ENCODE measurements at regions of chr19 and their contacts with region 1.

Region 1: DNA sequence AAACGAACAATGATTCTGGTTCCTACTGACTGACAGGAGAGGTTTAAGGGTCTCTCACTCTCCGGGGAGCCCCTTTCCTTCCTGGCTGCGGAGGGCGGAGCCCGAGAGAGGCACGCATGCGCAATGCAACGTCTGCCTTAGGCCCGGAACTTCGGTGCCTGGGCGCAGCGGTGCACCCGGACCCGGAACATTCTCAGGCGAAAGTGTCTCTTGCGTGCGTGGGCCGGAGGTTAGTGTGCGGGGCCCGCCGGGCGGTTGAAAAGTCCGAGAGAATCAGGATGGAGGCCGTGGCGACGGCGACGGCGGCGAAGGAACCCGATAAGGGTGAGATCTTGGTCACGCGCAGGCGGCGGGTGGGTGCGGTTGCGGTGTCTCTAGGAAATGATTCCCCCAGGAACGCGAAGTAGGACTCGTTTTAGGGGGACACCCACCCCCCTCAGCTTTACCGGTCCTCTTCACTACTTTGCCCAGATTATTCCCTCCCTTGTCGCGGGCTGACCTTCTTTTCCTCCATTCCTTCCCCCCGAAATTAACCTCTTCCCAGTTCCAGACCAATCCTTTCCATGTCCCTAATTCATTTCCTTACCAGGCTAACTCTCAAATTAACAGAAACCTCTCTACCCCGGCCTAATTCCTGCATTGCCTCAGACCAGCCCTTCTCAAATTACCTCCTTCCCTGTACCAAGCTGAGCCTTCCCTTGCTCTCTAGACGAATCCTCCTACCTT is at the start of gene CCDC97:
- DNase-seq: peak; percentile 89 to 95 (median 90)
- ATAC-seq: peak; percentile 79 to 91 (median 86)
- H3K4me3 ChIP-seq: peak within 1 kb of the TSS; percentile 40 to 95 (median 76)
- H3K27ac ChIP-seq: peak within 1 kb of the TSS; percentile 90 to 99 (median 96)
- H3K4me1 ChIP-seq: peaks cover 6 to 67% (median 31%) of the 10 kb centered on the region in 12 donors
- H3K27me3 ChIP-seq: no peaks in the 10 kb centered on the region
- CTCF ChIP-seq: peak in 1 of 12 donors; percentile 19
- POLR2A ChIP-seq: peak in 1 of 2 donors; percentile 60
- total RNA-seq, gene CCDC97: 10.0 to 22.2 (median 14.2) TPM

Region 2: DNA sequence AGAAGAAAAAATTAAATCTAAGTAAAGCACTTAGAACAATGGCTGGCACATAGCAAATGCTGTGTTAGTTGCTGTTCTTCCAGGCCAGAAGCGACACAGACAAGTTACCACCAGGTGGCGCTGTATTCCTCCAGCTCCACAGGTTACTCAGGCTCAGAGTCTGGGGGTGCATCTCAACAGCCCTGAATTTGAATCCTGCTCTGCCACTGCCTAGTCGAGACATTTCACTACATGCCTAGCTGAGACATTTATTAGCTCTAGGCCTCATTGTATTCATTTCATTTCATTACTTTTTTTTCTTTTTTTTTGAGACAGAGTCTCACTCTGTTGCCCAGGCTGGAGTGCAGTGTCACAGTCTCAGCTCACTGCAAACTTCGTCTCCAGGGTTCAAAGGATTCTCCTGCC is 335.6 kb before region 1 on chr19:
- intact Hi-C with region 1: loop called in 1 of 10 experiments (anchors 5 kb)
- DNase-seq: peak; percentile 42 to 68 (median 65)
- ATAC-seq: peak in 2 of 4 donors; percentile 46 to 67
- H3K4me3 ChIP-seq: no peak overlapping the region
- H3K27ac ChIP-seq: no peak overlapping the region
- H3K4me1 ChIP-seq: no peaks in the 10 kb centered on the region
- H3K27me3 ChIP-seq: peaks cover 0 to 20% (median 0%) of the 10 kb centered on the region in 9 donors
- CTCF ChIP-seq: peak; percentile 70 to 95 (median 84)
- POLR2A ChIP-seq: no peak

Region 3: DNA sequence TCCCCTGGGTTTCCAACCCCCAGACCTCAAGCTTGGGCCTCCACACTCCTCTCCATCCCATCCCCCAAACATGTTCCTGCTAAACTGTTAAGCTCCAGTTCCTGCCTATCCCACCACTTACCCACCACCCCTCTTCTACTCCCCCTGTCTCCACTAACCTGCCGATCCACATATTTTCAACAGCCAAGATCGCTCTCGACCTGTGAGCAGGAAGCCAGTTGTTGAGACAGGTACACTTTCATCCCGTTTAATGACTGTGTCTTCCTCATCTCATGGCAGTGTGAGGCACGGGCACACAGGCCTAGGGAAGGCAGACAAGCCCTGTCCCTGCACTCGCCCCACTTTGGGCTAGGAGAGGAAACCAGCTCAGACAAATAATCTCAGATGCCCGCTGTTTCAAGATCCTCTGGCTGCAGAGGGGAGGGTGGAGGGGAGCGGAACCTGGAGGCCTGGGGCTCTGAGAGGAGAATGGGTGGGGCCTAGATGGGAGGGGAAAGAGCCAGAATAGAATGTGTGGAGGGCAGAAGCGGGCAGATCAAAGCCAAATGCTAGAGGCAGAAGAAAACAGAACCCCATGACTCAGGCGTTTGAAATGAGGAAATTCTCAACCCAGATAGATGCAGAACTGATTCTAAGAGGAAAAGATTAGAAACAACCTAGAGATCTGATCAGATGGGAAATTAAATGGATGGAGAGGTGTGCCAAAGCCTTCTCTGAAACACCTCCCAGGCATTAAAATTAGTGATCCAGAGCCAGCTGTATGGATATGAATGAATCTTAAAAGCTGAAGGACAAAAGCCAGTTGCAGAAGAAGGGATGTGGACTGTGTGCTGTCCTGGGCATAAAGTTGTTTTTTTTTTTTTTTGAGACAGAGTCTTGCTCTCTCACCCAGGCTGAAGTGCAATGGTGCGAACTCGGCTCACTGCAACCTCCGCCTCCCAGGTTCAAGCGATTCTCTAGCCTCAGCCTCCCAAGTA is 134.1 kb before region 1 on chr19:
- intact Hi-C with region 1: no loop called
- DNase-seq: peak in 4 of 5 donors; percentile 22 to 61 (median 39)
- ATAC-seq: peak in 3 of 4 donors; percentile 69 to 78 (median 70)
- H3K4me3 ChIP-seq: peak overlapping the region in 1 of 12 donors; percentile 30
- H3K27ac ChIP-seq: peak overlapping the region in 1 of 12 donors; percentile 73
- H3K4me1 ChIP-seq: peaks cover 0 to 22% (median 0%) of the 10 kb centered on the region in 12 donors
- H3K27me3 ChIP-seq: no peaks in the 10 kb centered on the region
- CTCF ChIP-seq: no peak
- POLR2A ChIP-seq: no peak

Region 4: GRCh38 chr19:41206926-41207750 is 103.1 kb before region 1 on chr19:
- intact Hi-C with region 1: loop called (anchors 1 to 5 kb)
- DNase-seq: peak; percentile 82 to 95 (median 85)
- ATAC-seq: peak; percentile 75 to 89 (median 82)
- H3K4me3 ChIP-seq: peak overlapping the region in 6 of 12 donors; percentile 10 to 36 (median 17)
- H3K27ac ChIP-seq: peak overlapping the region in 11 of 12 donors; percentile 32 to 74 (median 69)
- H3K4me1 ChIP-seq: peaks cover 0 to 9% (median 0%) of the 10 kb centered on the region in 12 donors
- H3K27me3 ChIP-seq: no peaks in the 10 kb centered on the region
- CTCF ChIP-seq: no peak
- POLR2A ChIP-seq: no peak

Region 5: GRCh38 chr19:41327576-41328156 is 17.5 kb after region 1 on chr19:
- intact Hi-C with region 1: loop called in 1 of 10 experiments (anchors 2 kb)
- DNase-seq: peak; percentile 78 to 91 (median 84)
- ATAC-seq: peak; percentile 8 to 57 (median 38)
- H3K4me3 ChIP-seq: peak overlapping the region in 10 of 12 donors; percentile 18 to 49 (median 44)
- H3K27ac ChIP-seq: peak overlapping the region; percentile 66 to 95 (median 88)
- H3K4me1 ChIP-seq: peaks cover 4 to 95% (median 63%) of the 10 kb centered on the region in 12 donors
- H3K27me3 ChIP-seq: no peaks in the 10 kb centered on the region
- CTCF ChIP-seq: no peak
- POLR2A ChIP-seq: no peak

Region 6: DNA sequence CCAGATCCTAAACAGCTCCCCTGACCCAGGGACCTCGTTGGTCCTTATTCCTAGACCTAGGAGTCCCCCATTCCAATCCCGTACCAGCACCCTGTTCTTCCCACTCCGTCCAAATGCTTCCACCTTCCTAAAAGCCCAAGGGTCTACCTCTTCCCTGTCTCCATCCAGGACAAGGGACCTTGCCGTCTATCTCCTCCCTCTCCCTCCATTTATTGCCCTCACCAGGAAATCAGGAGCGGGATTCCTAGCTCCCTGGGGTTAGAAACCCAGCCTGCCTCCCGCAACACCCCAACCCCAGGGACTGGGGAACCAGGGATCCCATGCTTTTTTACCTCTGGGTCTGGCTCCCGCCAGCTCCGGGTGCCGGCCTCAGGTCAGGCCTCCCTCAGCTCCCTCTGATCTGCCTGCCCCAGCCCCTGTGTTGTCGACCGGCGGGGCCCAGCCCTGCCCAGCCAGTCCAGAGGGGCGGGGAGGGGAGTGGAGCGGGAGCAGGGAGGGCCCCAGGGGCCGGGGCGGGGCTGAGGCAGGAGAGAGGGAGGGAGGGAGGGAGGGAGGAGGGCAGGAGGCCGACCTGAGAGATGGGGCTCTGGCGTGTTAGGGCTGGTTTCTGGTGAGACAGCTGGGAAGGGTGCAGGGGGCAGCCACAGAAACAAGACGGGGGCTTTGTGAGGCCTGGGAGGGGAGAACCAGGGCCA is 116.9 kb after region 1 on chr19 and contains the start of gene B3GNT8:
- intact Hi-C with region 1: loop called in 2 of 10 experiments (anchors 10 kb)
- DNase-seq: peak; percentile 89 to 93 (median 92)
- ATAC-seq: peak; percentile 70 to 87 (median 85)
- H3K4me3 ChIP-seq: peak within 1 kb of the TSS; percentile 16 to 84 (median 62)
- H3K27ac ChIP-seq: peak within 1 kb of the TSS; percentile 54 to 95 (median 92)
- H3K4me1 ChIP-seq: peaks cover 7 to 82% (median 52%) of the 10 kb centered on the region in 12 donors
- H3K27me3 ChIP-seq: no peaks in the 10 kb centered on the region
- CTCF ChIP-seq: no peak
- POLR2A ChIP-seq: peak; percentile 30 to 84
- total RNA-seq, gene B3GNT8: 6.4 to 11.5 (median 9.4) TPM

Region 7: GRCh38 chr19:41563854-41564514 is 253.8 kb after region 1 on chr19:
- intact Hi-C with region 1: loop called in 1 of 10 experiments (anchors 10 kb)
- DNase-seq: no peak
- ATAC-seq: no peak
- H3K4me3 ChIP-seq: peak overlapping the region in 7 of 12 donors; percentile 8 to 40 (median 13)
- H3K27ac ChIP-seq: no peak overlapping the region
- H3K4me1 ChIP-seq: peaks cover 0 to 32% (median 13%) of the 10 kb centered on the region in 12 donors
- H3K27me3 ChIP-seq: peaks cover 17 to 71% (median 38%) of the 10 kb centered on the region in 9 donors
- CTCF ChIP-seq: no peak
- POLR2A ChIP-seq: no peak

Measured in heart left ventricle (tissue), 16 donors.